ENCODE measurements at regions of chr11 and their contacts with region 1.

Region 1: GRCh38 chr11:103812680-103813079 is 223.8 kb upstream of the DDI1 start:
- DNase-seq: no peak
- ATAC-seq: no peak
- H3K4me3 ChIP-seq: no peak overlapping the region
- H3K27ac ChIP-seq: no peak overlapping the region
- H3K4me1 ChIP-seq: no peaks in the 10 kb centered on the region
- H3K27me3 ChIP-seq: no peaks in the 10 kb centered on the region
- CTCF ChIP-seq: no peak
- POLR2A ChIP-seq: no peak

Region 2: DNA sequence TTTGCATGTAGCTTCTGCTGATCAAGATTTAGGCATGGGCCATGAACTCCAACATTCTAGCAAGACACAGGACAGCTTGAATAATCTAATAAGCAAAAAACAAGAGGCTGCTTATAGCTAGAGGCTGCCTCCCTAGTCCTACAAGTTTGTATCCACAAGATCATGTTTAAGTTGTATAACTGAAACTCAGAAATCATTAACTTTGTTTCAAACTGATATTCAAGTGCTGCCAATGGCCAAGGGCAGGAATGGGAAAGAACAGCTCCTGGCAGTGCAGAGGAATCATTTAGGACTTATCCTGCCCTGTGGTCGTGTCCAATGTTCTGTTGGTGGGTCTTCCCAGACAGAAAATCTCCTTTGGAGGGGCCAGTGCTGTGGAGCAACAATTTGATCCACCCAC is 14.2 kb after region 1 on chr11:
- in situ Hi-C with region 1: no loop called
- intact Hi-C with region 1: loop called (anchors 2 kb)
- DNase-seq: no peak
- ATAC-seq: no peak
- H3K4me3 ChIP-seq: no peak overlapping the region
- H3K27ac ChIP-seq: no peak overlapping the region
- H3K4me1 ChIP-seq: no peaks in the 10 kb centered on the region
- H3K27me3 ChIP-seq: no peaks in the 10 kb centered on the region
- CTCF ChIP-seq: no peak
- POLR2A ChIP-seq: no peak

Measured in gastrocnemius medialis (tissue), 4 donors.